ENCODE measurements at regions of chr5 and their contacts with region 1.

Region 1: DNA sequence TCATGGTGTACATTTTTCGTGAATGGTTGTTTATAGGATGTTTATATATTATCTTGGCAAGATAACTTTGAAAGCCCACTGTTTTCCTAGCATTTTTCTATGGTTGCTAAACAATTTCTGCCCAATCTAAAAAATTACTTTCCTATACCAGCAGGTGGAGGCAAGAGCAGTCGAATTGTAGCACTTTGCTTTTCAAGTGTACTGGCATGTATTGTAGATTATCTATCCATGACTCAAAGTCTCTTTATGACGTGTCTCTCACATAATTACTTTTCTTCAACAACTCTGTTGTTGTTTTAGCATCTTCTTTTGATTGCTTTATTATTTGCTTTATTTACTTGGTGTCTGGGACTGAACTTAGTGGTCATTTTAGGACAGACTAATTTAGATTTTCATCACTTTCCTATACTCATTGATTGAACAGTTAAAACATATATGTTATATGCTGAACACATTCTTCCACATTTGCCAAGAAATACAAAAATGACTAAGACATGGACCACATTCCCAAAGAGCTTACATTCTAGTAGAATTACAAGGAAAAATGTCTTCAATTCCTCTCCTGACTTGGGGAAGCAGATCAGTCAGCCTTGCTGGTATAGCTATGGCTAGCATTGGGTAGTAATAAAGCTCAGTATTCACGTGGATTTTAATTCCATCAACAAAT is 20.7 kb downstream of the NLN start:
- DNase-seq: peak; percentile 76
- H3K4me3 ChIP-seq: no peak overlapping the region
- H3K27ac ChIP-seq: peak overlapping the region; percentile 11
- H3K4me1 ChIP-seq: peaks cover 4% of the 10 kb centered on the region
- H3K27me3 ChIP-seq: no peaks in the 10 kb centered on the region
- CTCF ChIP-seq: peak; percentile 75 to 82

Region 2: GRCh38 chr5:65640240-65640639 is 102.5 kb before region 1 on chr5:
- CTCF ChIA-PET with region 1: no interaction called
- dilution Hi-C with region 1: no loop called
- in situ Hi-C with region 1: no loop called
- intact Hi-C with region 1: no loop called
- DNase-seq: no peak
- H3K4me3 ChIP-seq: no peak overlapping the region
- H3K27ac ChIP-seq: no peak overlapping the region
- H3K4me1 ChIP-seq: no peaks in the 10 kb centered on the region
- H3K27me3 ChIP-seq: no peaks in the 10 kb centered on the region
- CTCF ChIP-seq: no peak

Region 3: DNA sequence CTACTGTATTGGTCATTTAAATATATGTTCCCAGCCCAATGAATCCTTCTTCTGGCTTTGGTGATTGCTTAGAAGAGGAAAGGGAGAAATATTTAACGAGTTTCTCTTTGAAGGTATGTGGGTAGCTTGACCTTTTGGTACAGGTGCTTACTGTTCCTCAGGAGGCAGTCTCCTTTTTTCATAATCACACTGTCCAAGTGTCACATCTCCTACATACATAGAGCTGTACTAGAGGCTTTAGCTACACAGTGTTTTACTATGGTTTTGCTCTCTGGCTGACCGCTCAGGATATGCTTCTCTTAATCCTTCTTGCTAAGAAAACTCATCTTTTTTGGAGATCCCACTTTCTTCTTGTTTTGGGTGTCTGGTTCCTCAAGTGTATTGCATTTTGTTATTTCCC is 190.6 kb after region 1 on chr5:
- CTCF ChIA-PET with region 1: no interaction called
- dilution Hi-C with region 1: no loop called
- in situ Hi-C with region 1: no loop called
- intact Hi-C with region 1: loop called (anchors 2 kb)
- DNase-seq: no peak
- H3K4me3 ChIP-seq: no peak overlapping the region
- H3K27ac ChIP-seq: no peak overlapping the region
- H3K4me1 ChIP-seq: no peaks in the 10 kb centered on the region
- H3K27me3 ChIP-seq: no peaks in the 10 kb centered on the region
- CTCF ChIP-seq: no peak

Region 4: DNA sequence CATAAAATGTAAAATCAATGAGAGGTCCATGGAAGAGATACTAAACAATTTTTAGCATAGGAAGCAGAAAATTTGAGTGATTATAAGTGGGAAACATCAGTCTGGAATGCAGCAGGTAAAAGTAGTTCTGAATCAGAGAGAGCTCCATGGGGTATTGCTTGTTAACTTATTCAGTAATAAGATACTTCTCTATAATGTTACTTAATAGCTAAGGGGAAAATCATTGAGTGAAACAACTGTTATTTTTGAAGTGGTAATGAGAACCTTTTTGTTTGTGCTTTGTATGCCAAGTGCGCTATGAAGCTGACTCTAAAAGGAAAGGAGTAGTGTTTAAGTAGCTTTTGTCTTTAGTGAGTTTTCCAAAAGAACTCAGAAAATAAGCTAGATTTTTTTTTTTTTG is 278.9 kb after region 1 on chr5:
- CTCF ChIA-PET with region 1: no interaction called
- dilution Hi-C with region 1: no loop called
- in situ Hi-C with region 1: no loop called
- intact Hi-C with region 1: loop called (anchors 10 kb)
- DNase-seq: no peak
- H3K4me3 ChIP-seq: no peak overlapping the region
- H3K27ac ChIP-seq: no peak overlapping the region
- H3K4me1 ChIP-seq: no peaks in the 10 kb centered on the region
- H3K27me3 ChIP-seq: no peaks in the 10 kb centered on the region
- CTCF ChIP-seq: no peak

Measured in mammary epithelial cell (primary cell).